AG04449 (cell line): ENCODE measurements at regions of chr3 and their contacts with region 1.

Region 1: GRCh38 chr3:111989061-111989678 is 9.6 kb upstream of the TAGLN3 start:
- DNase-seq: peak; percentile 49
- H3K4me3 ChIP-seq: no peak overlapping the region
- CTCF ChIP-seq: peak; percentile 70

Region 2: GRCh38 chr3:111200027-111200426 is 789.1 kb before region 1 on chr3:
- CTCF ChIA-PET with region 1: no interaction called
- POLR2A ChIA-PET with region 1: no interaction called
- DNase-seq: no peak
- H3K4me3 ChIP-seq: no peak overlapping the region
- CTCF ChIP-seq: no peak

Region 3: GRCh38 chr3:111978493-111979433 is 10.4 kb before region 1 on chr3 and contains the start of gene ABHD10:
- CTCF ChIA-PET with region 1: interaction called, 38 read pairs
- POLR2A ChIA-PET with region 1: interaction called, 4 read pairs
- DNase-seq: peak; percentile 84
- H3K4me3 ChIP-seq: peak within 1 kb of the TSS; percentile 89
- CTCF ChIP-seq: no peak

Region 4: GRCh38 chr3:112007633-112008032 is 18.5 kb after region 1 on chr3:
- CTCF ChIA-PET with region 1: interaction called, 219 read pairs
- POLR2A ChIA-PET with region 1: no interaction called
- DNase-seq: peak; percentile 70
- H3K4me3 ChIP-seq: no peak overlapping the region
- CTCF ChIP-seq: no peak

Region 5: DNA sequence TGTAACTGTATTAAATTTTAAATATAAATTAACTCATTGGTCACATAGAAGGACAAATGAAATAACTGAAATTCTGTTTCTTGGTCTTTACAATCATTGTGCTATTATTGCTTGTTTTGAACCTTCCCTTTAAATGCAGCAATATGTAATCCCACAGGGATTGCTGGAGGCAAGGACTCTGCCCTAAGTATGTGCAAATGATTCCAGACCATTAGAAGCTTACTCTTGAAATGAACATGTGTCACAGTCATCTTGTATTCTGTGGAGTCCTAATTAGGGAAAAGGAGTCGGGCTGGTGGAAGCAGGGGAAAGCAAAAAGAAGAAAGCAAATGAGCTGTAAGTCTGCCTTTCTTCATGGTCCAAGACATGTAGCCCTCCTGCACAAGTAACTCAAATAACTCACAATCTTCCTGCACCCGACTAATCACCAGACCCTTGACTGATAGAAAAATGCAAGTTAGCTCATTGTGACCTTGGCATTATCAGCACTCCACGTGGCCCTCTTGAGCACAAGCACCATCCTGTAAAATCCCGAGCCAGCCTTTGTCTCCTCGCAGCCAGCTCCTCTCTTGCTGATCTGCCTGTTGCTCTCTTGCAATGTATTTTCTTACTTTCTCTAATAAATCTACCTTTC is 43.0 kb after region 1 on chr3:
- CTCF ChIA-PET with region 1: interaction called, 17 read pairs
- POLR2A ChIA-PET with region 1: no interaction called
- DNase-seq: no peak
- H3K4me3 ChIP-seq: no peak overlapping the region
- CTCF ChIP-seq: no peak